ENCODE measurements at regions of chr6 and their contacts with region 1.

Region 1: DNA sequence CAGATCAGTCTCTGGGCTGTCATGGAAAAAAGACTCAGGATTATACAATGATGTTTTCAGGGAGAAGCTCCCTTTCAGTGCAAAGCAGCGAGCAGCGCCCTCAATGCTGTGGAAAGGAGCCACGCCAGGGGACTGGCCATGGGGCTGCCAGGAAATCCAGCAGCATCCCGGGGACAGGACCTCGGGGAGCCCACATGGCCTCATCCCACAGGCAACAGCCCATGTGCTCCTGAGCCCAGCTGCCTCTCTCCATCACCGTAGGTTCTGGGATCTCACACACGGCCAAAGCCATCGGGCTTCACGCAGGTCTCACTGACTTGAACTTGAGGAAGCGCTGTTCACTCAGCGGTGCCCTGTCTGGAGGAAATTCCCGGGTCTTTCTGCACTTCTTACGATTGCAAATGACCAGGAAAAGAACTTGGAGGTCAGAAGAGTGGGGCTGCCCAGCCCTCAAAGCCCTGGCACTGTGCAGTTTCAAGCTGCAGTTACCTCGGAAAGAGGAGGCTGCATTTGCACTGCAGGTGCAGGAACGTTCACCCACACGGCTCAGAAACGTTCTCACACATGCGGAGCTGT is 125.9 kb upstream of the THBS2 start:
- DNase-seq: no peak
- H3K4me3 ChIP-seq: no peak overlapping the region
- CTCF ChIP-seq: no peak
- POLR2A ChIP-seq: no peak

Region 2: GRCh38 chr6:167781066-167781767 is 1598.4 kb before region 1 on chr6:
- intact Hi-C with region 1: loop called (anchors 5 kb)
- DNase-seq: peak in 1 of 2 donors; percentile 32
- H3K4me3 ChIP-seq: no peak overlapping the region
- CTCF ChIP-seq: no peak
- POLR2A ChIP-seq: no peak